ENCODE measurements at regions of chr9 and their contacts with region 1.

Region 1: DNA sequence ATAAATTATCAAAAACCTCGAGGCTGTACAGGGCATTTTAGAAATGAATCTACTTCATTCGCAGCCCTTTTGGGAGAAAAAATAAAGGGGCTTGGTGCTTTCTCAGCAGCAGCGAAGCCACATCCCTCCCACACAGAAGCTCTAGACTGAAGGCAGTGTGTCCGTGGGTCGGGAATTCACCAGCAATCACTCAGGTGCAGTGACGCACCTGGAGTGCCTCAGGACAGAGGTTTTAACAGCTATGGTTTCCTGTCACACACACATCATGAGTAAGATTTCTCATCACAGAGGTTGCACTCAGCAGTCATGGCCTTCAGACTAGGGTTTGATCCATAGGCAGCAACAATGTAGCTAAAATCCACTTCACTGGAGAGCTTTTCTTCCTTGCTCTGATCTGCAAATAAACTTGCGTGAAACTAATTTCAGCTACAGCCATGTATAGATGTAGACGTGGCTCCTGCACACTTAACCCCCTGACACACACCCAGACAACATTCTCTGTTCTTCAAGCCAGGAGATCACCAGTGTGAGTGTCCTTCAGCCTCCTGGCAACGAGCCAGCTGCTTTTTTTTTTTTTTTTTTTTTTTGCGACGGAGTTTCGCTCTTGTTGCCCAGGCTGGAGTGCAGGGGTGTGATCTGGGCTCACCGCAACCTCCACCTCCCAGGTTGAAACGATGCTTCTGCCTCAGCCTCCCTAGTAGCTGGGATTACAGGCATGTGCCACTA is 34.8 kb downstream of the DYNC2I2 start:
- DNase-seq: no peak
- ATAC-seq: no peak
- H3K4me3 ChIP-seq: no peak overlapping the region
- H3K27ac ChIP-seq: no peak overlapping the region
- H3K4me1 ChIP-seq: no peaks in the 10 kb centered on the region
- H3K27me3 ChIP-seq: no peaks in the 10 kb centered on the region
- CTCF ChIP-seq: no peak

Region 2: GRCh38 chr9:128428644-128429512 is 193.0 kb before region 1 on chr9:
- CTCF ChIA-PET with region 1: no interaction called
- POLR2A ChIA-PET with region 1: no interaction called
- intact Hi-C with region 1: no loop called
- DNase-seq: no peak
- ATAC-seq: no peak
- H3K4me3 ChIP-seq: no peak overlapping the region
- H3K27ac ChIP-seq: no peak overlapping the region
- H3K4me1 ChIP-seq: no peaks in the 10 kb centered on the region
- H3K27me3 ChIP-seq: no peaks in the 10 kb centered on the region
- CTCF ChIP-seq: no peak

Region 3: GRCh38 chr9:130499804-130500263 is 1877.9 kb after region 1 on chr9:
- CTCF ChIA-PET with region 1: no interaction called
- POLR2A ChIA-PET with region 1: interaction called, 10 read pairs
- intact Hi-C with region 1: no loop called
- DNase-seq: peak; percentile 80
- ATAC-seq: peak; percentile 93
- H3K4me3 ChIP-seq: no peak overlapping the region
- H3K27ac ChIP-seq: peak overlapping the region; percentile 50
- H3K4me1 ChIP-seq: peaks cover 16% of the 10 kb centered on the region
- H3K27me3 ChIP-seq: no peaks in the 10 kb centered on the region
- CTCF ChIP-seq: no peak

Measured in PC-3 (cell line).